Activated CD4-positive, alpha-beta T cell treated with anti-CD3 and anti-CD28 coated beads, Interleukin-2, amount 10 ng/mL, durations not matched to agents 24 days and 14 days (primary cell): ENCODE measurements at regions of chr15 and their contacts with region 1.

Region 1: GRCh38 chr15:80058851-80059785 is at the start of gene ZFAND6:
- DNase-seq: peak; percentile 99
- H3K4me3 Mint-ChIP-seq: peak within 1 kb of the TSS; percentile 96
- H3K27ac Mint-ChIP-seq: peak within 1 kb of the TSS; percentile 95
- H3K4me1 Mint-ChIP-seq: peaks cover 32% of the 10 kb centered on the region
- H3K27me3 Mint-ChIP-seq: no peaks in the 10 kb centered on the region
- total RNA-seq, gene ZFAND6: 40.4 and 43.5 TPM in 2 replicates

Region 2: GRCh38 chr15:79896637-79897379 is 162.3 kb before region 1 on chr15 and contains the start of gene MTHFS:
- intact Hi-C with region 1: loop called (anchors 1 kb)
- DNase-seq: peak; percentile 94
- H3K4me3 Mint-ChIP-seq: peak within 1 kb of the TSS; percentile 98
- H3K27ac Mint-ChIP-seq: peak within 1 kb of the TSS; percentile 100
- H3K4me1 Mint-ChIP-seq: peaks cover 36% of the 10 kb centered on the region
- H3K27me3 Mint-ChIP-seq: no peaks in the 10 kb centered on the region
- total RNA-seq, gene MTHFS: 34.5 and 35.3 TPM in 2 replicates

Region 3: DNA sequence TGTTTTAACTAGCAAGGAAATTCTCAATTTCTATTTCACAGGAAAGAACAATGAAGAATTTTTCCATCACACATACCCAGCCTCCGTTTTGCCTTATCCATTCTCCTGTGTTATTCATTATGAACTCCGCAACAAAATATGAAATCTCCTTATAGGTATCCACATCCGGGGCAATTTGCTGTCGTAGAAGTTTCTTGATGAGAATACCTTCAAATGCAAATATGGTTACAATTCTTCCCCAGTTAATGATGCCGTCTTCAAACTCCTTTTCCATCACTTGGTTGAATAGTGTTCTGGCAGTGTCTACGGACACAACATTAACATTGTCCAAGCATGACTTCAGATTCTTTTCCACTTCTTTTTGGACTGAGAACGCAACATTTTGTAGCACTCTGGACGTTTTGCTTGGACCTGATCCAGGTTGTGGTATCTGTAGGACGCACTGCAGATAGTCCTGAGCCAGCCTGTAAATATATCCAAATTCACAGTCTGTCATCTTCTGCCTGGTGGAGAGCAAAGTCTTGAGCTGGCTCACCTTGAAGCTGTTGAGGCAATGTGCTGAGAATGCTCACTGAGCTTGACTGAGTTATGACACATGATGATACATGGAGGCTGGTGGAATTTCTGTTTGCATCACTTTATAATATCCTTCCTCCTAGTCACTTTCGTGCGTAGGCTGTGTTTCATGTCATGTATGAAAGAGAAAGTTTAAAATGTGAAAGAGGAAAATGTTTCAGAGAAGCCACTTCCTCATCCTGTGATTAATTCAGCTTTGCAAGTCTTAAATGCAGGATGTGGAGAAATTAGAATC is 88.3 kb before region 1 on chr15 and contains the start of gene BCL2A1:
- intact Hi-C with region 1: loop called (anchors 2 kb)
- DNase-seq: peak; percentile 91
- H3K4me3 Mint-ChIP-seq: peak within 1 kb of the TSS; percentile 94
- H3K27ac Mint-ChIP-seq: peak within 1 kb of the TSS; percentile 96
- H3K4me1 Mint-ChIP-seq: peaks cover 47% of the 10 kb centered on the region
- H3K27me3 Mint-ChIP-seq: no peaks in the 10 kb centered on the region
- total RNA-seq, gene BCL2A1: 110 and 111 TPM in 2 replicates

Region 4: GRCh38 chr15:80031841-80032240 is 27.3 kb before region 1 on chr15:
- intact Hi-C with region 1: loop called (anchors 1 kb)
- DNase-seq: peak; percentile 62
- H3K4me3 Mint-ChIP-seq: peak overlapping the region; percentile 59
- H3K27ac Mint-ChIP-seq: peak overlapping the region; percentile 79
- H3K4me1 Mint-ChIP-seq: peaks cover 26% of the 10 kb centered on the region
- H3K27me3 Mint-ChIP-seq: no peaks in the 10 kb centered on the region

Region 5: DNA sequence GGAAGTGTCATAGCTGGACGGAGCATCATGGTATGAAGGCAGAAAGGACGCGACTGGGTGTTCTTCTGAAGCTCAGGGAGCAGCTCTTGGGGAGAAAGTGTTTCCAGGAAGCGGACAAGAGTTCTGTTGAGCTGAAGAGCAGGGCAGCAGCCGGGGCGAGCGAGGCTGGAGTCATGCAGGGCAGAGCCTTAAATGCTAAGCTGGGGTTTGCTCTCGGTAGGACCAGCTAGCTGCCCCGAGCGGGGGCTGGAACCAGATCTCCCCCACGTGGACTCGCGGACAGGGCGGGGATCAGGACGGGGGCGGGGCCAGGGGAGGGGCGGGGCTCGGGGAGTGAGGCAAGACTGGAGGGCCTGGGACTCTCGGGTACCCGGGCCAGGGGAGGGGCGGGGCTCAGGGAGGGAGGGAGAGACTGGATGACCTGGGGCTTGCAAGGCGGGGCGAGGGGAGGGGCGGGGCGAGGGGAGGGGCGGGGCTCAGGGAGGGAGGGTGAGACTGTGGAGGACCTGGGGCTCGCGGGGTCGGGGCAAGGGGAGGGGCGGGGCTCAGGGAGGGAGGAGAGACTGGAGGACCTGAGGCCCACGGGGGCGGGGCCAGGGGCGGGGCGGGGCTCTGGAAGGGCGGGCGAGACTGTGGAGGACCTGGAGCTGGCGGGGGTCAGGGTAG is 93.2 kb after region 1 on chr15:
- intact Hi-C with region 1: loop called (anchors 1 kb)
- DNase-seq: peak; percentile 93
- H3K4me3 Mint-ChIP-seq: peak overlapping the region; percentile 97
- H3K27ac Mint-ChIP-seq: peak overlapping the region; percentile 82
- H3K4me1 Mint-ChIP-seq: peaks cover 33% of the 10 kb centered on the region
- H3K27me3 Mint-ChIP-seq: peaks cover 10% of the 10 kb centered on the region